Body of pancreas (tissue), 4 donors: ENCODE measurements at regions of chr11 and their contacts with region 1.

Region 1: GRCh38 chr11:64298966-64299846 is 952 bp upstream of the CATSPERZ start:
- DNase-seq: peak; percentile 59 to 81 (median 70)
- ATAC-seq: peak; percentile 46
- H3K4me3 ChIP-seq: peak overlapping the region in 1 of 2 donors; percentile 2
- H3K27ac ChIP-seq: no peak overlapping the region
- H3K4me1 ChIP-seq: peaks cover 27% of the 10 kb centered on the region
- H3K27me3 ChIP-seq: peaks cover 0 to 24% of the 10 kb centered on the region in 2 donors
- CTCF ChIP-seq: peak in 1 of 7 experiments; percentile 2
- POLR2A ChIP-seq: no peak

Region 2: GRCh38 chr11:64207256-64208085 is 91.7 kb before region 1 on chr11:
- intact Hi-C with region 1: loop called (anchors 5 kb)
- DNase-seq: peak in 3 of 4 donors; percentile 32 to 63 (median 41)
- ATAC-seq: peak; percentile 45
- H3K4me3 ChIP-seq: no peak overlapping the region
- H3K27ac ChIP-seq: peak overlapping the region; percentile 5 to 72 (median 56)
- H3K4me1 ChIP-seq: peaks cover 9% of the 10 kb centered on the region
- H3K27me3 ChIP-seq: no peaks in the 10 kb centered on the region
- CTCF ChIP-seq: no peak
- POLR2A ChIP-seq: peak in 2 of 3 donors; percentile 27 to 47